Psoas muscle (tissue), 8 donors: ENCODE measurements at regions of chr4 and their contacts with region 1.

Region 1: DNA sequence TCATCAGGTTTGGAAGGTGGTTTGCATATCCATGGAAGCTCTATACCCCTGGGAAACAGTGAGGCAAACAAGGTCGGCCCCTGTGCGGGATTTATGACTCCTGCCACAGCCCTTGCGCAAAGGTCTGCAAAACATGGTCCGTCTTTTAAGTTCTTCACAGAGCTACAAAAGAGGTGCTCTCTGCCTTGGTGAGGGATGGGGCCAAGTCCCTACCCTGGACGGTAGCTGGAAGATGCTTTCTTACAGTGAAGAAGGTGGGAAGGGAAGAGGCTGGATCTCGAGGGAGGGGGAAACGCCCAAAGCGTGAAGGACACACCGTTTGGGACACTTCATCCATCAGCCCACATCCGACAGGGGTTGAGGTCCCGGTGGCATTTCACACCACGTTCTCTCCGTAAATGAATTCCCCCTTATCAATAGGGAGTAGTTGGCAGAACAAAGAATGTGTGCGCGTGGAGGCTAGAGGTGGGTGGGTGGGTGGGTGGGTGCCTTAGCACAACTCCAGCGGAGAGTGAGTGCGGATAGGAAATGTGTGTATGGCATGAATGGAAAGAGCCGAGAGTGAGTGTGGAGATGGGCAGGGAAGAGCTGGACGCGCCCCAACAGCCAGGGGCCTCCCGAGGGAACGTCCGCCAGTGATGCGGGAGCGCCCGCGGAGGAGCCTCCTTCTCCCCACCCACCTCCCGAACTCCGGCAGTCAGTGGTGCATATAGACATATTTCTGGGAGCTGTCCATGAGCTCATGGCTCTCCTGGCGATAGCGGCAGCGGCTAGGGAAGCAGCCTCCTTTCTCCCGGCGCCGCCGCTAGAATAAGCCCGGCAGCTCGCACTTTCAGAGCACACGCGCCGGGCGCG is 68.3 kb downstream of the LARP7 start:
- DNase-seq: peak; percentile 24 to 68
- ATAC-seq: peak; percentile 72 to 83 (median 75)
- H3K4me3 ChIP-seq: peak overlapping the region; percentile 77
- H3K27ac ChIP-seq: peak overlapping the region; percentile 33
- H3K4me1 ChIP-seq: no peaks in the 10 kb centered on the region
- H3K27me3 ChIP-seq: no peaks in the 10 kb centered on the region
- CTCF ChIP-seq: no peak

Region 2: GRCh38 chr4:112674376-112674775 is 30.8 kb before region 1 on chr4:
- intact Hi-C with region 1: loop called in 1 of 2 experiments (anchors 5 kb)
- DNase-seq: no peak
- ATAC-seq: peak in 1 of 4 donors; percentile 44
- H3K4me3 ChIP-seq: no peak overlapping the region
- H3K27ac ChIP-seq: peak overlapping the region; percentile 72
- H3K4me1 ChIP-seq: peaks cover 26% of the 10 kb centered on the region
- H3K27me3 ChIP-seq: no peaks in the 10 kb centered on the region
- CTCF ChIP-seq: no peak

Region 3: GRCh38 chr4:113080050-113080449 is 374.8 kb after region 1 on chr4:
- intact Hi-C with region 1: no loop called
- DNase-seq: no peak
- ATAC-seq: no peak
- H3K4me3 ChIP-seq: no peak overlapping the region
- H3K27ac ChIP-seq: no peak overlapping the region
- H3K4me1 ChIP-seq: no peaks in the 10 kb centered on the region
- H3K27me3 ChIP-seq: no peaks in the 10 kb centered on the region
- CTCF ChIP-seq: no peak